Activated CD4-positive, alpha-beta T cell treated with anti-CD3 and anti-CD28 coated beads for 36 hours (primary cell): ENCODE measurements at regions of chr3 and their contacts with region 1.

Region 1: DNA sequence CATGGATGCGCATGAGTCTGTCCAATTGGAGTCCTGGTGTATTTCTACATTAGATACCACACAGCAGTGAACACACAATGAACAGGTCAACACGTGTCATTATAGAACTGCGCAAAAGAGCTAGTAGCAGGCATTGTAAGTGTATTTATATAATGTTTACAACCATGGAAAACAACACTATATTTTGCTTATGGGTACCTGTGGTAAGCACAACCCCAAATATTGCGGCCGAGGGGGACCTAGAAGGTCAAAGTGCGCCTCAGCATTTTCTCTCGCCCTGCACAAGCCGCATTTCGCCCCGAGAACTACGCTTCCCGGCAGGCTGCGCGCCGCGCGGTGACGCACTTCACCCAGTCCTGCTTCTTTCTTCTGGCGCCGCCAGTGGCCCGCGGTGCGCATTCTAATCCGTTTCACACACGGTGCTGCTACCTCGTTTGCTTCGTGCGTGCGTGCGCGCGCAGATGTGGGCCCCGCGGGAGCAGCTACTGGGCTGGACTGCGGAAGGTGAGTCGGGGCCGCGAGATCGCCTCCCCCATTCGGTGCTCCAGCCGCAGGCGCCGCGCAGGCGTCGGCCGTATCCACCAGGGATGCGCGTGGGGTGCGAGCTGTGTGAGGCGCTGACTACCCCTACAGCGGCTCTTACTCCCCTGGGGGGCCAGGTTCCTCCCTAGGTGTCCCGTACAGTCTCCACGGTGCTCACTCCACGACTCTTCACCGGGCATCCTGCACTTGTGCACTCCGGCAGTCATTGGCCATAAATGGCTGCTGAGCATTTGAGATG is at the start of gene ZNF589:
- DNase-seq: peak; percentile 97
- ATAC-seq: peak; percentile 99
- H3K4me3 Mint-ChIP-seq: peak within 1 kb of the TSS; percentile 87
- H3K27ac Mint-ChIP-seq: peak within 1 kb of the TSS; percentile 84
- H3K4me1 Mint-ChIP-seq: peaks cover 26% of the 10 kb centered on the region
- H3K27me3 Mint-ChIP-seq: no peaks in the 10 kb centered on the region
- total RNA-seq, gene ZNF589: 28.6 to 29.6 TPM

Region 2: GRCh38 chr3:47567149-47567548 is 673.8 kb before region 1 on chr3:
- CTCF ChIA-PET with region 1: no interaction called
- POLR2A ChIA-PET with region 1: interaction called, 11 read pairs
- intact Hi-C with region 1: no loop called
- DNase-seq: no peak
- ATAC-seq: no peak
- H3K4me3 Mint-ChIP-seq: no peak overlapping the region
- H3K27ac Mint-ChIP-seq: no peak overlapping the region
- H3K4me1 Mint-ChIP-seq: no peaks in the 10 kb centered on the region
- H3K27me3 Mint-ChIP-seq: peaks cover 2% of the 10 kb centered on the region

Region 3: GRCh38 chr3:48064292-48064829 is 176.5 kb before region 1 on chr3:
- CTCF ChIA-PET with region 1: no interaction called
- POLR2A ChIA-PET with region 1: no interaction called
- intact Hi-C with region 1: no loop called
- DNase-seq: no peak
- ATAC-seq: peak; percentile 60
- H3K4me3 Mint-ChIP-seq: no peak overlapping the region
- H3K27ac Mint-ChIP-seq: no peak overlapping the region
- H3K4me1 Mint-ChIP-seq: peaks cover 23% of the 10 kb centered on the region
- H3K27me3 Mint-ChIP-seq: no peaks in the 10 kb centered on the region

Region 4: GRCh38 chr3:48268381-48269183 is 27.7 kb after region 1 on chr3:
- CTCF ChIA-PET with region 1: interaction called, 9 read pairs
- POLR2A ChIA-PET with region 1: interaction called, 23 read pairs
- intact Hi-C with region 1: loop called (anchors 1 kb)
- DNase-seq: peak; percentile 95
- ATAC-seq: peak; percentile 91
- H3K4me3 Mint-ChIP-seq: peak overlapping the region; percentile 57
- H3K27ac Mint-ChIP-seq: peak overlapping the region; percentile 92
- H3K4me1 Mint-ChIP-seq: peaks cover 39% of the 10 kb centered on the region
- H3K27me3 Mint-ChIP-seq: no peaks in the 10 kb centered on the region

Region 5: GRCh38 chr3:48301020-48301796 is 60.3 kb after region 1 on chr3:
- CTCF ChIA-PET with region 1: interaction called, 7 read pairs
- POLR2A ChIA-PET with region 1: interaction called, 3 read pairs
- intact Hi-C with region 1: loop called (anchors 1 kb)
- DNase-seq: peak; percentile 97
- ATAC-seq: peak; percentile 85
- H3K4me3 Mint-ChIP-seq: peak within 1 kb of the TSS; percentile 92
- H3K27ac Mint-ChIP-seq: peak within 1 kb of the TSS; percentile 98
- H3K4me1 Mint-ChIP-seq: peaks cover 27% of the 10 kb centered on the region
- H3K27me3 Mint-ChIP-seq: no peaks in the 10 kb centered on the region